H1 (cell line): ENCODE measurements at regions of chr19 and their contacts with region 1.

Region 1: DNA sequence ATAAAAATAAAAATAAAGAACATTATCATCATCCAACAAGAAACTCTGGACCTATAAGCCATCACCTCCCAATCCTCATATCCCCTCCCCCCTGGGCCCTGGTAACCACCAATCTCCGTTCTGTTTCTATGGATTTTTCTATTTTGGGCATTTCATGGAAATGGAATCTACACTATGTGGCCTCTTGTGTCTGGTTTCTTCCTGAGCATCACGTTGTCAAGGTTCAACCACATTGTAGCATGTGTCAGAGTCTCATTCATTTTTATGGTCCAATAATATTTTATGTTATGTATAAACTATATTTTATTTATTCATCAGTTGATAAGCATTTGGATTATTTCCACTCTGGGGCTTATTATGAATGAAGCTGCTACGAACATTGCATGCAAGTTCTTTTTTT is 26.9 kb downstream of the SULT2B1 start:
- DNase-seq: no peak
- H3K4me3 ChIP-seq: no peak overlapping the region
- H3K27ac ChIP-seq: no peak overlapping the region
- H3K4me1 ChIP-seq: 0 out of 7 replicates have a peak, but pooled peaks cover 0 to under 1% (median 0%) of the 10 kb centered on the region in 4 experiments
- H3K27me3 ChIP-seq: no peaks in the 10 kb centered on the region; a peak in 1 of 7 replicates
- CTCF ChIP-seq: no peak
- EP300 ChIP-seq: no peak
- POLR2A ChIP-seq: no peak
- RAD21 ChIP-seq: no peak

Region 2: DNA sequence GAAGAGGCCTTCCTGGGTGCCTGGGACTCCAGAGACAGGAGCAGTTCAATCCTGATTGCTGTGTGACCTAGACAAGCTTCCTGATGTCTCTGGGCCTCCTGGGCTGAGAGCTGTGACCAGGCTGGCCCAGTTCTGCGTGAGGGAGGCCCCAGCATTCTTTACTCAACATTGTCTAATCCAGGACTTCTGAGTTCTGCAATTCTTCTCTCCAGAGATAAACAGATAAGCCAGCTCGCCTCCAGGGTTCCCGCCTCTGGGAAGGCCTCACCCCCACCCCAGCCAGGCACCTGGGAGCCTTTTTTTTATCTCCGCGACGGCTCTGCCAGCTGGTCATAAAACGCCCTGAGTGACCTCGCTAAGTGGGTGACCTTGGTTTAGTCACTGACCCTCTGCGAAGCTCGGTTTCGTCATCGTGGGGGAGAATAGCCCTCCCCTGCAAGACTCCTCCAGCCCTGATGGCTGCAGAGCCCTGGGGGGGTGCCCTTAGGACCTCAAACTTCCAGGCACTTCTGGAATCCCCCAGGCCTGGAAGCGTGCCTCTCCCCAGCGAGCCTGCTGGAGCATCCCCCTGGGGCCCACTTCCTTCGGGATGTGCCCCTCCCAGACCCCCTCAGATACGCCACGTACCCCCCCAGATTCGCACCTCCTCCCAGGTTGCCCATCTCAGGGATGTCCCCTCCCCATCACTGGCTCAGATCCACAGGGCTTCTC is 25.1 kb before region 1 on chr19:
- CTCF ChIA-PET with region 1: interaction called, 35 read pairs
- POLR2A ChIA-PET with region 1: interaction called, 8 read pairs
- DNase-seq: no peak
- H3K4me3 ChIP-seq: peak overlapping the region in 2 of 4 experiments; percentile 5 to 44; a peak in 3 of 8 replicates
- H3K27ac ChIP-seq: peak overlapping the region; percentile 41; the same call in 1 of the 2 replicates
- H3K4me1 ChIP-seq: peaks cover 0 to 24% (median 12%) of the 10 kb centered on the region in 4 experiments; a peak in 6 of 7 replicates
- H3K27me3 ChIP-seq: no peaks in the 10 kb centered on the region; a peak in 1 of 7 replicates
- CTCF ChIP-seq: 0 out of 4 replicates have a peak, but pooled peaks of 1 of the 3 experiments have one; percentile 9
- EP300 ChIP-seq: no peak
- POLR2A ChIP-seq: no peak
- RAD21 ChIP-seq: no peak

Region 3: DNA sequence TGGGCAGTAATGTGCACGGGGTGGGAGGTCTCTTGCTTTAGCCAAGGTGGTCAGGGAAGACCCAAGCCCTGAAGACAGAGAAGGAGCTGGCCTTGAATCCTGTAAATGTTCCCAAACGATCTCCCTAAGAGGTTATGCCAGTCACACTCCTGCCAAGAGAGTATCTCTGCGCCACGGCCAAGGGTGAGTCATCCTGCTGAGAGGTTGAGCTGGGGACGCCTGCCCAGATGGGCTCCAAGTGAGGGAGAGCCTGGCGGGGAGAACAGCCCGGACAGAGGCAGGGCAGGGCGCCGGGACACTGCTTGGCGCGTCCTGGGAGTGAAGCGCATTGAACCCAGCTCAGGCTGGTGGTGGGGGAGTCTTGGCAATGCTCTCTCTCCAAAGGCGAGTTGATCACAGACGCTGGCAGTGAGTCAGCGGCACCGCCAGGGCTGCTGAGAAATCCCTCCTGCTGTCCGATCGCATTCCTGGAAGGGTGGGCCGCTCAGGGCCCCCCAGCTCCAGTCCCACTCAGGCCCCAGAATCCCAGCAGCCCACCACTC is 10.5 kb before region 1 on chr19:
- CTCF ChIA-PET with region 1: interaction called, 35 read pairs
- POLR2A ChIA-PET with region 1: interaction called, 9 read pairs
- DNase-seq: peak in 1 of 2 experiments; percentile 68
- H3K4me3 ChIP-seq: peak overlapping the region in 3 of 4 experiments; percentile 10 to 50 (median 14); a peak in 4 of 8 replicates
- H3K27ac ChIP-seq: no peak overlapping the region; the same call in 1 of the 2 replicates
- H3K4me1 ChIP-seq: peaks cover 0 to 8% (median 3%) of the 10 kb centered on the region in 4 experiments; a peak in 5 of 7 replicates
- H3K27me3 ChIP-seq: no peaks in the 10 kb centered on the region; a peak in 2 of 7 replicates
- CTCF ChIP-seq: peak in 1 of 3 experiments; percentile 7; a peak in 2 of 4 replicates
- EP300 ChIP-seq: no peak
- POLR2A ChIP-seq: peak in 1 of 2 experiments; percentile 47; a peak in 1 of 3 replicates
- RAD21 ChIP-seq: no peak

Region 4: DNA sequence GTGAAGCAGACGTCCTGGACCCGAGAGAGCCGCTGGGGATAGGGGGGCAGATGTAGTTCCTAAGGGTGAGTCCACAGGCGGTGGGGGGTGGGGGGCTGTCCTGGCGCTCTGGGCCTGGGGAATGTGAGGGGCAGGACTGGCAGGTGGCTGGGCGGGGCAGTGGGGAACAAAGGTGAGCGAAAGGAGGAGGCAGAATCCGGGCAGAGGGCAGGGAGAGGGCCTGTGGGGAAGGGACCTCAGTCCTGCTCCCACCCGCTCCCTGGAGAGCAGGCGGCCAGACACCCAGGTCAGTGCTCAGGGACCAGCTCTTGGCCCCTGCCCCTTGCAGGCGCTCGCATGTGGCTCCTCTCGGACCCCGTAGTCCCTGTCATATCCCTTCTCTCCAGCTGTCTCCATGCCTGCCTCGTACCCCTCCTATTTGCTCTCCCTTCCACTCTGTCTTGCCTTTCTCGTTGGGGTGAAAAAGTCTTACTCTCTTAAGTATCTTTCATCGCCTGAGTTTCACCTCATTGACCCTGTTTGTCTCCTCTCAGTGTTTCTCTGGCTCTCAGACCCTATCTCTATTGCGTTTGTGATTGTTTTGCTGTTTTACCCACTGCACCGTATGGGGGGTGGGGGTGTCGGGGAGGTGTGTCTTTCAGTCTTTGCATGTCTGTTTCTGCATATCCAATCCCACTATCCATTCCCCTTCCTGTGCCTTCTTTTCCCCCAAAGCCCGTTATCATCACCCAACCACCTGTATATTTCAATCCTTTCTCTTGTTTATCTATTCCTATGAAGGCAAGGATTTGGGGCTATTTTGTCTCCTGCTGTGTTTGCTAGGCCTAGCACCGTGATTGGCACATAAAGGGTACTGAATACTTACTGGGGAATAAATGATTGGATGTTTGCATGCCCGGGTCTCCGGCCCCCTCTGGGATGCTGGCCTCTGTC is 46.2 kb after region 1 on chr19:
- CTCF ChIA-PET with region 1: no interaction called
- POLR2A ChIA-PET with region 1: no interaction called
- DNase-seq: no peak
- H3K4me3 ChIP-seq: peak overlapping the region; percentile 53 to 87 (median 80)
- H3K27ac ChIP-seq: 0 out of 2 replicates have a peak overlapping the region, but pooled peaks have one; percentile 47
- H3K4me1 ChIP-seq: peaks cover 3 to 17% (median 9%) of the 10 kb centered on the region in 4 experiments
- H3K27me3 ChIP-seq: no peaks in the 10 kb centered on the region
- CTCF ChIP-seq: no peak
- EP300 ChIP-seq: no peak
- POLR2A ChIP-seq: peak in 1 of 2 experiments; percentile 78; a peak in 1 of 3 replicates
- RAD21 ChIP-seq: no peak

Region 5: GRCh38 chr19:48660854-48661731 is 82.2 kb after region 1 on chr19:
- CTCF ChIA-PET with region 1: no interaction called
- POLR2A ChIA-PET with region 1: no interaction called
- DNase-seq: peak in 1 of 2 experiments; percentile 84
- H3K4me3 ChIP-seq: no peak overlapping the region
- H3K27ac ChIP-seq: no peak overlapping the region
- H3K4me1 ChIP-seq: peaks cover 0 to 3% (median 0%) of the 10 kb centered on the region in 4 experiments; a peak in 1 of 7 replicates
- H3K27me3 ChIP-seq: no peaks in the 10 kb centered on the region; a peak in 1 of 7 replicates
- CTCF ChIP-seq: no peak
- EP300 ChIP-seq: no peak
- POLR2A ChIP-seq: no peak
- RAD21 ChIP-seq: no peak